CD14-positive monocyte (primary cell): ENCODE measurements at regions of chr3 and their contacts with region 1.

Region 1: DNA sequence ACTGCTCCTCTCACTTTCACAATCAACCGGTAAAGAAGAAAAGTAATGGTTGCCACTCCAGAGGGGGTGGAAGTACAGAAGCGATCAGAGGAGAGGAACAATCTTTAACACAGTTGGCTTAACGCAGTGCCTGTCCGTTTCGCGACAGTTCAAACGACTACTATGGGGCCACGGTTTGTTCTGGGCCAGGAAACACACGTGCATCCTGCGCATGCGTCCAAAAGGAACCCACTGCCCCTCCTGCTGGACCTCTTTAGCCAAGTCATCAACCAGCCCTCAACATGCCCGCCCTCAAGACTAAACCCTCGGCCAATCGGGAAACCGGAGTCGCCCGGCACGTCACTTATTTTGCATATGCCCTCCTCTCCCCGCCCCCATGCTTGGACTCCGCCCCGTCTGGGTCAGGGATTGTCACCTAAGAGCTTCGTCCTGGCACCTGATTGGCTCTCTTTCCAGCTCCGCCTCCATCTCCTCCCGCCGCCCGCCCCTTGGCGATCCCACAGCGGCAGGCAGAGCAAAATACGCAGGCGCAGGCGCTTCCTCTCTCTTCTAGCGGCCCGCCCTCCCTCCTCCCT is 345 bp upstream of the CDV3 start:
- DNase-seq: peak; percentile 100
- H3K4me3 ChIP-seq: peak overlapping the region; percentile 39 to 100 (median 92)
- H3K4me3 Mint-ChIP-seq: peak overlapping the region; percentile 77 to 88
- H3K27ac ChIP-seq: peak overlapping the region; percentile 97 to 99
- H3K27ac Mint-ChIP-seq: peak overlapping the region; percentile 99 to 100 (median 99)
- H3K4me1 ChIP-seq: peaks cover 61 to 78% of the 10 kb centered on the region in 2 donors
- H3K4me1 Mint-ChIP-seq: peaks cover 73% of the 10 kb centered on the region
- H3K27me3 ChIP-seq: no peaks in the 10 kb centered on the region
- H3K27me3 Mint-ChIP-seq: peaks cover 0 to 1% (median 0%) of the 10 kb centered on the region in 3 donors
- CTCF ChIP-seq: peak; percentile 13

Region 2: DNA sequence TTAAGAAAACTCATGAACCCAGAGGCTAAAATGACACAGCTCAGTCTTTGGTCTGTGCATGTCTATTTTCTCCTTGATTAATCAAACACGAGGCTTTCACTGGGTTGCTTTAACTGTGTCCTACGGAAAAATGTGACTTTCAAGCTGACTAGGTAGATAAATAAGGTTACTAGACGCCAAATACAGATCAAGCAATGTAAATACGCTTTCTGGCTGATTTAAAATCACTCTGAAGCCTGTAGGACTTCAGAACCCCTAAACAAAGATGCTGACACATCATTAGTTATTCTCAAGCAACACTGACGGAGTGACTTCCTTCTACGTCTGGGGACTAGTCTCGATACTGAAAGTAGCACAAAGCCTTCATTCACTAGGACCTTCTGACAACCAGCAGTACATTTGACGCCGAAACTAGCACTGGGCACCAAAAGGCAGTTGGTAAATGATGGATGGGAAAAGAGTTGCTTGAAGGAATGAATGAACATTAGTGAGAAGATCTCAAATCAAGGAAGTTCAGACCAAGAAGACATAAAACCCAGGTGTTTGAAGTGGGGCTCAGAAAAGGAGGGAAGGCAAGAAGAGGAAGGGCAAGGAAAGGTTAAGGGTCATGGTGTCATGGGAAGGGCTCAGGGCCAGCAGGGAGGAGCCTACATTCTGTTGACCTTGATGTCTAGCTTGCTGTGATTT is 66.8 kb before region 1 on chr3:
- intact Hi-C with region 1: loop called in 1 of 2 experiments (anchors 2 kb)
- DNase-seq: peak; percentile 62 to 79 (median 69)
- H3K4me3 ChIP-seq: peak overlapping the region; percentile 7 to 65 (median 43)
- H3K4me3 Mint-ChIP-seq: peak overlapping the region; percentile 77 to 82
- H3K27ac ChIP-seq: peak overlapping the region; percentile 55 to 85
- H3K27ac Mint-ChIP-seq: peak overlapping the region; percentile 89 to 99 (median 95)
- H3K4me1 ChIP-seq: peaks cover 14 to 20% of the 10 kb centered on the region in 2 donors
- H3K4me1 Mint-ChIP-seq: peaks cover 22% of the 10 kb centered on the region
- H3K27me3 ChIP-seq: no peaks in the 10 kb centered on the region
- H3K27me3 Mint-ChIP-seq: peaks cover 0 to 2% (median 0%) of the 10 kb centered on the region in 3 donors
- CTCF ChIP-seq: no peak

Region 3: GRCh38 chr3:133531981-133532380 is 41.2 kb before region 1 on chr3:
- intact Hi-C with region 1: loop called in 1 of 2 experiments (anchors 5 kb)
- DNase-seq: no peak
- H3K4me3 ChIP-seq: no peak overlapping the region
- H3K4me3 Mint-ChIP-seq: no peak overlapping the region
- H3K27ac ChIP-seq: no peak overlapping the region
- H3K27ac Mint-ChIP-seq: peak overlapping the region in 1 of 7 donors; percentile 57
- H3K4me1 ChIP-seq: peaks cover 12 to 15% of the 10 kb centered on the region in 2 donors
- H3K4me1 Mint-ChIP-seq: peaks cover 24% of the 10 kb centered on the region
- H3K27me3 ChIP-seq: no peaks in the 10 kb centered on the region
- H3K27me3 Mint-ChIP-seq: peaks cover 0 to 3% (median 0%) of the 10 kb centered on the region in 3 donors
- CTCF ChIP-seq: no peak

Region 4: GRCh38 chr3:133805527-133806475 is 232.7 kb after region 1 on chr3 and contains the start of gene SRPRB:
- intact Hi-C with region 1: loop called in 1 of 2 experiments (anchors 10 kb)
- DNase-seq: peak; percentile 88 to 92 (median 91)
- H3K4me3 ChIP-seq: peak within 1 kb of the TSS; percentile 82 to 94 (median 89)
- H3K4me3 Mint-ChIP-seq: peak within 1 kb of the TSS; percentile 94 to 97
- H3K27ac ChIP-seq: peak within 1 kb of the TSS; percentile 19 to 73
- H3K27ac Mint-ChIP-seq: peak within 1 kb of the TSS; percentile 73 to 91 (median 87)
- H3K4me1 ChIP-seq: peaks cover 16% of the 10 kb centered on the region in 2 donors
- H3K4me1 Mint-ChIP-seq: peaks cover 23% of the 10 kb centered on the region
- H3K27me3 ChIP-seq: no peaks in the 10 kb centered on the region
- H3K27me3 Mint-ChIP-seq: peaks cover 3 to 7% (median 6%) of the 10 kb centered on the region in 3 donors
- CTCF ChIP-seq: no peak
- polyA plus RNA-seq, gene SRPRB: 6.1 to 30.6 (median 29.9) TPM